ENCODE measurements at regions of chr1 and their contacts with region 1.

Region 1: DNA sequence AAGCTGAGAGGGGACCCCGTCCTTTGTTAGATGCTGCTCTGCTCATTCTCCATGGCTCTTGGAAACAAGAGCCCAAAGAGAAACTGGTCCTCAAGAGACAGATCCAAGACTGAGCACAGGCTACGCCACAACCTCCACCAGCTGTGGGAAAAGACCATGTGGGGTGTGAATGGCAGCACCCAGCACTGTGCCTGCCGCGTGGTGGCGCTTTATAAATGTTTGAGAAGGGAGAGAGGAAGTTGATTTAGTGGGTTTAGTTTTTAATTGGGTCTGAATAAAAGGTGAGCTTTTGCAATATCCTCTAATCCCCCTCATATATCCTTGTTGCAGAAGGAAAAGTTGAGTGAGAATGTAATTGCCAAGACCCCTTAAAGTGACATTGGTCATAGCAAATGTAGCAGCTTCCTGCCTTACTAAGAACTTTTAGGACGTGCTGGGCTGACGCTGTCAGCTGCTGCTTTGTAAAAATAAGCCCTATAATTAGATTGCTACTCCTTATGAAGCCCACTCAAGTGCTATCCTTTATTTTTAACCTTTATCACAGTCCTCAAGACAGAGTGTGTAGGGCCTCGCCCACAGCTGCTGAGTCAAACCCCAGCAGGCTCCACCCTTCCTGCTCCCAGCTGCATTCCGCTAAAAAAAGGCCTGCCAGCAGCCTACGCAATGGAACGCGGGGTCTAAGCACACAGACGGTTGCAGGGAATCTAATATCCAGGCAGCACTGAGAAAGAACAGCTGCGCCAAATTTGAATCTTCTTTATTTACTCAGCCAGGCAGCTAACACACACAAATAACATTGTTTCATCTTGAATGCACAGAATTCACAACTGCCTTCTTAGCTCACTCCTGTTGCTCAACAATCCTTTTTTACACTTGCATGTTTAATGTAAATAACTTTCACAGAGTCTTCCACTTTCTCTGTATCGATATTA is 47.4 kb upstream of the PRDX6 start:
- DNase-seq: no peak
- H3K4me3 ChIP-seq: peak overlapping the region in 1 of 2 experiments; percentile 2; a peak in 1 of 4 replicates
- H3K27ac ChIP-seq: peak overlapping the region; percentile 43 to 74; a peak in 3 of 4 replicates
- H3K4me1 ChIP-seq: peaks cover 6 to 17% of the 10 kb centered on the region in 2 experiments; a peak in 3 of 4 replicates
- H3K27me3 ChIP-seq: no peaks in the 10 kb centered on the region
- CTCF ChIP-seq: no peak
- EP300 ChIP-seq: no peak
- RAD21 ChIP-seq: no peak

Region 2: DNA sequence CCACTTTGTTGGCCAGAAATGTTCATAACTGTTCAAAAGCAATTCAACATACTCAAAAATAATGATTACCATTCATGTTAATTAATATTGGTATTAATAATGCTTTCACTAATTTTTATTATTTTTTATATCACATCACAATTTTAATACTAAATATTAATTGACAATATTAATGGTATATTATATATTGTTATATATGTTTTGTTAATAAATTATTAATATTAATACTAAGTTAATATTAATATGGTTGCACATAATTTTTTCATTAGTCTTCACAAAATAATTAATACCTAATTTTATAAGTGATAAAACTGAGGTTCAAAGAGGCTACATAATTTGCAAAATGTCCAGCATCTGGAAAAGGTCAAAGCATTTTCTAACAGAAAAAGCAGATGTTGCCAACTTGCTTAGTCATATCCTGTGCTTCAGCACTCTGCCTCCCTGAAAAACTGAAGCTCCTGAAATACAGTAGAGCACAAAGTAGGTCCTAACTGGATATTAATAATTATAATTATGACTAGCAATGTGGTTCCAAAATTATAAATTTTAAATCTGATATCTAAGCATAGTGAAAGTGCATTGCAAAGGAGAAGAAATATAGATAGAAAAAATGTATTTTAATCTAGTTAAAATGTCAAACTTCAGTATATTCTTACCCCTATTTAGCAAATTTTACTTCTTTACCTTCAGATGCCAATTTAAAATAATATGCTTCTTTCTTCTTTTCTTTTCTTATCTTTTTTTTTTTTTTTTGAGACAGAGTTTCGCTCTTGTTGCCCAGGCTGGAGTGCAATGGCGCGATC is 99.4 kb before region 1 on chr1:
- CTCF ChIA-PET with region 1: no interaction called
- POLR2A ChIA-PET with region 1: no interaction called
- DNase-seq: no peak
- H3K4me3 ChIP-seq: no peak overlapping the region
- H3K27ac ChIP-seq: peak overlapping the region; percentile 46 to 72; a peak in 3 of 4 replicates
- H3K4me1 ChIP-seq: peaks cover 0 to 12% of the 10 kb centered on the region in 2 experiments; a peak in 2 of 4 replicates
- H3K27me3 ChIP-seq: no peaks in the 10 kb centered on the region
- CTCF ChIP-seq: no peak
- EP300 ChIP-seq: peak in 1 of 2 experiments; percentile 80; a peak in 2 of 4 replicates
- RAD21 ChIP-seq: no peak

Region 3: GRCh38 chr1:173459885-173460284 is 30.1 kb after region 1 on chr1:
- CTCF ChIA-PET with region 1: interaction called, 10 read pairs
- POLR2A ChIA-PET with region 1: no interaction called
- DNase-seq: no peak
- H3K4me3 ChIP-seq: no peak overlapping the region
- H3K27ac ChIP-seq: no peak overlapping the region
- H3K4me1 ChIP-seq: no peaks in the 10 kb centered on the region
- H3K27me3 ChIP-seq: no peaks in the 10 kb centered on the region
- CTCF ChIP-seq: no peak
- EP300 ChIP-seq: no peak
- RAD21 ChIP-seq: no peak

Region 4: DNA sequence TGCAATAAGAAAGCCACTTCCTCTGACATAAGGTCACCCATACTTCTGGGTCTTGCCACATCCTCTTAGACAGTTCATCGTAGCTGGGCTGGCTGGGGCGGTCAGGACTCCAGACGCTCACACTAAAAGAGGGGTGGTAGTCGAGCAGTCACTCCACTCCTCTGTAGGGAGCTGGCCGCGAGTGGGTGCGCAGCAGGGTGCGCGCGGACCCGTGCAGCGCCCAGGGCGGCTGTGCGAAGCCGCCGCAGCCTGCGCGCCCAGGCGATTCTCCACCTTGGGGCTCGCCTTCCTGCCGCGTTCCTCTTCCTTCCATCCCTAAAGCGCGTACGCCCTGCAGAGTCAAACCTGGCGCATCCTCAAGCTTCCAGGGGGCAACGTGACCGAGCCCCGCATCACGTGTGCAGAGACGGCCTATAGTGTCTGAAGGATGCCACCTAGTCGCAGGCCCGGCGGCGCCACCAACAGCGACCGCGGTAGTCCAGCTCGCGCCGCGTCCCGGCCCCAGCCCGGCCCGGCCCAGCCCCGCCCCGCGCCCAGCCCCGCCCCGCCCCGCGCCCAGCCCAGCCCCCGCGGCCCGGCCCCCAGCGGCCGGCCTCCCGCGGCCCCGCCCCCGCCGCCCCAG is 47.0 kb after region 1 on chr1:
- CTCF ChIA-PET with region 1: interaction called, 10 read pairs
- POLR2A ChIA-PET with region 1: no interaction called
- DNase-seq: peak; percentile 97
- H3K4me3 ChIP-seq: peak overlapping the region; percentile 75 to 99
- H3K27ac ChIP-seq: peak overlapping the region; percentile 89 to 92
- H3K4me1 ChIP-seq: peaks cover 22 to 47% of the 10 kb centered on the region in 2 experiments; a peak in 3 of 4 replicates
- H3K27me3 ChIP-seq: no peaks in the 10 kb centered on the region
- CTCF ChIP-seq: no peak
- EP300 ChIP-seq: no peak
- RAD21 ChIP-seq: no peak

Measured in SK-N-SH (cell line).